Mammary epithelial cell (primary cell): ENCODE measurements at regions of chr6 and their contacts with region 1.

Region 1: DNA sequence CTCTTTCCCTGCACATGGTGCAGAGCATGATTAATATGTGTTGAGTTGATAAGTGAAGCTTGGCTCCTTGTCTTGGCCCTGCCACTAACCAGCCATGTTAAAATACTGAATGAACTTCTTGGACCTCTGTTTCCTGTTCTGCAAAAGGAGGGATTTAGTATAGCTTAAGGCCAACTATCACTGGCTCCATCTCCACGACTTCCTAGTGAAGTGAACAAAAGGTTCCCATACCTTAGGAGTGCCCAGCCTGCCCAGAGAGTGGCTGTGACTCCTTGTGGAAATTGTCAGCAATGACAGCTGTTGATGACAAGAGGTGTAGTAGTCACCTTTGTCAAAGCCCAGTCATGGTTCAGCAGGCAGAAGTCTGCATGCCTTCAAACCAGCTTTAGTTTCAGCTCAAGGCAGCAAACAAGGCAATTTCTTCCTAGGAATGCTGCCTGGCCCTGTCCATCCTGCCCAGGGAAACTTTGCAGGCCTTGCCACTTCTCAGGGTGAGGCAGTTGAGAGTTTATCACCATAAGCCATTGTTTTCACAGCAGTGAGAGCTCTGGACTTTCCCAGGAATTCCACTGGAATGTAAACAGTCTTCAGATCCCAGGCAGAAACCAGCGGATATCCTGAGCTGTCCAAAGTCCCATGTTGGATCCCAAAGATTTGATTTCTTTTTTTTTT is 169.7 kb upstream of the TNFAIP3 start:
- DNase-seq: peak; percentile 63
- H3K4me3 ChIP-seq: no peak overlapping the region
- H3K27ac ChIP-seq: no peak overlapping the region
- H3K4me1 ChIP-seq: peaks cover 20% of the 10 kb centered on the region
- H3K27me3 ChIP-seq: no peaks in the 10 kb centered on the region
- CTCF ChIP-seq: no peak

Region 2: DNA sequence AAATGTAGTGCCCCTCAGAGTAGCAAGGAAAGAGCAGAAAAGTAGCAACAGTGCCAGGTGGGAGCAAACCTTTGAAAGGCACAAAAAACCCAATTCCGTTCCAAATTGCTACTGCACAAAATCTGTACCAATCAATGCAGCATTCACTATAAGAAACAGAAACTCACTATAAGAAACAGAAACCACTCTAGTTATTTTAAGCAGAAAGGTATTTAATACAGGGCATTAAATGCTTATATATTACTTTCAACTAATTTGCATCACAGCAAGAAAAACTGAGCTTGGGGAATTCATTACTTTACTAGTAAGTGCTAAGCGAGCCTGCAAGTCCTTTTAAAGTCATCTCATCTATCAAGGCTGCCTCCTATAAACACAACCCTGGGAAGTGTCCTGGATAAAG is 86.7 kb before region 1 on chr6:
- CTCF ChIA-PET with region 1: no interaction called
- dilution Hi-C with region 1: no loop called
- in situ Hi-C with region 1: no loop called
- intact Hi-C with region 1: no loop called
- DNase-seq: no peak
- H3K4me3 ChIP-seq: no peak overlapping the region
- H3K27ac ChIP-seq: no peak overlapping the region
- H3K4me1 ChIP-seq: no peaks in the 10 kb centered on the region
- H3K27me3 ChIP-seq: no peaks in the 10 kb centered on the region
- CTCF ChIP-seq: no peak

Region 3: GRCh38 chr6:137951064-137951597 is 253.7 kb after region 1 on chr6:
- CTCF ChIA-PET with region 1: no interaction called
- dilution Hi-C with region 1: loop called (anchors 5 kb)
- in situ Hi-C with region 1: loop called in 1 of 2 experiments (anchors 5 kb)
- intact Hi-C with region 1: no loop called
- DNase-seq: no peak
- H3K4me3 ChIP-seq: no peak overlapping the region
- H3K27ac ChIP-seq: no peak overlapping the region
- H3K4me1 ChIP-seq: no peaks in the 10 kb centered on the region
- H3K27me3 ChIP-seq: no peaks in the 10 kb centered on the region
- CTCF ChIP-seq: no peak

Region 4: DNA sequence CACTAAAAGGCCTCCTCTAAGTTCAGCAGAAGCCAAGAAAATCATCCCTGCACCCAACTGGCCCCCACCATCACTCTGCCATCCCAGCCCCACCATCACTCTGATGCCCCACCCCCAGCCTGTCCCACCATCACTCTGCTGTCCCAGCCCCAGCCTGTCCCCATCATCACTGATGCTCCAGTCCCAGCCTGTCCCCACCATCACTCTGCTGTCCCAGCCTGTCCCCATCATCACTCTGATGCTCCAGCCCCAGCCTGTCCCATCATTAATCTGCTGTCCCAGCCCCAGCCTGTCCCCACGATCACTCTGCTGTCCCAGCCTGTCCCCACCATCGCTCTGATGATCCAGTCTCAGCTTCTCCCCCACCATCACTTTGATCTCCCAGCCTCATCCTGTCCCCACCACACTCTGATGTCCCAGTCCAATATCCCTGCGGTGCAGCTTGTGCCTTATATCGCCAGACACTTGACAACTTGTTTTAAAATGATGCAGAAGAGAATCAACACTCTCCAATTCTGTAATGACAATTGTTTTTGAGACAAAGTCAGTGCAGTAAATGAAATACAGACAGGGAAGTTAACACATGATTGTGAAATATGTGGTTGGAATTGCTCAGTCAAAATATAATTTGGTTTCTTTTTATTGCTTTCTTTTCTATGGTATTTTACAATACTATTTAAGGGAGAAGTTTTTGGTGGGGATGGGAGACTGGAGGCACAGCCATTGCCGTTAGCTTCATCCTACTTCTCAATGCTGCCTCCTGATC is 270.5 kb after region 1 on chr6:
- CTCF ChIA-PET with region 1: no interaction called
- dilution Hi-C with region 1: no loop called
- in situ Hi-C with region 1: loop called in 1 of 2 experiments (anchors 10 kb)
- intact Hi-C with region 1: no loop called
- DNase-seq: peak; percentile 19
- H3K4me3 ChIP-seq: no peak overlapping the region
- H3K27ac ChIP-seq: no peak overlapping the region
- H3K4me1 ChIP-seq: no peaks in the 10 kb centered on the region
- H3K27me3 ChIP-seq: no peaks in the 10 kb centered on the region
- CTCF ChIP-seq: no peak